ENCODE measurements at regions of chr19 and their contacts with region 1.

Region 1: DNA sequence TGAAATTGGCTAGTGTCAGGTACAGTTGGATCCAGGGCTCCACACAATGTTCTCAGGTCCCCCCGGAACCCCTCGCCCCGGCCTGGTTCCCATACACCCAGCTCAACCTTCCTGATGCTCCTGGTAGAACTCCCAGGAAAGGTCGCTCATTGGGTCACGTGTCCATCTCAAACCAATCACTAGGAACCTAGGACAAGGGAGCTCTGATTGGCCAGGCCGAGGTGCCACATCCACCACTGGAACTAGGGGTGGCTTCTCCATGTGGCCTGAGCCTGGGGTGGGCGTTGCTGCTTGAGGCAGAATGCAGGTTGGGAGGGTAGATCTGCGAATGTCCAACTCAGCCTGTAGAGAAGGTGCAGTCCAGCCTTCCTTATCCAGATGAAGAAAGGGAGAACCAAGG is 6.9 kb upstream of the MEF2B start:
- DNase-seq: no peak
- ATAC-seq: 0 out of 2 replicates have a peak, but pooled peaks have one; percentile 10
- H3K4me3 Mint-ChIP-seq: no peak overlapping the region
- H3K27ac Mint-ChIP-seq: no peak overlapping the region
- H3K4me1 Mint-ChIP-seq: peaks cover 2% of the 10 kb centered on the region; the same call in 1 of the 2 replicates
- H3K27me3 Mint-ChIP-seq: peaks cover 20% of the 10 kb centered on the region
- CTCF ChIP-seq: no peak

Region 2: GRCh38 chr19:19053508-19054314 is 123.2 kb before region 1 on chr19:
- CTCF ChIA-PET with region 1: no interaction called
- POLR2A ChIA-PET with region 1: no interaction called
- DNase-seq: peak; percentile 84
- ATAC-seq: peak; percentile 84
- H3K4me3 Mint-ChIP-seq: no peak overlapping the region
- H3K27ac Mint-ChIP-seq: no peak overlapping the region
- H3K4me1 Mint-ChIP-seq: no peaks in the 10 kb centered on the region
- H3K27me3 Mint-ChIP-seq: no peaks in the 10 kb centered on the region
- CTCF ChIP-seq: peak; percentile 73; the same call in 1 of the 2 replicates

Region 3: GRCh38 chr19:19145684-19146608 is 31.0 kb before region 1 on chr19:
- CTCF ChIA-PET with region 1: interaction called, 52 read pairs
- POLR2A ChIA-PET with region 1: no interaction called
- DNase-seq: peak; percentile 94
- ATAC-seq: peak; percentile 83
- H3K4me3 Mint-ChIP-seq: no peak overlapping the region
- H3K27ac Mint-ChIP-seq: no peak overlapping the region
- H3K4me1 Mint-ChIP-seq: no peaks in the 10 kb centered on the region
- H3K27me3 Mint-ChIP-seq: peaks cover 31% of the 10 kb centered on the region
- CTCF ChIP-seq: peak; percentile 98